Panc1 (cell line): ENCODE measurements at regions of chr3 and their contacts with region 1.

Region 1: GRCh38 chr3:46006238-46007032 is 10.8 kb upstream of the FYCO1 start:
- DNase-seq: no peak
- ATAC-seq: no peak
- H3K4me3 ChIP-seq: no peak overlapping the region
- H3K27ac ChIP-seq: no peak overlapping the region
- H3K4me1 ChIP-seq: no peaks in the 10 kb centered on the region
- H3K27me3 ChIP-seq: no peaks in the 10 kb centered on the region
- CTCF ChIP-seq: no peak

Region 2: DNA sequence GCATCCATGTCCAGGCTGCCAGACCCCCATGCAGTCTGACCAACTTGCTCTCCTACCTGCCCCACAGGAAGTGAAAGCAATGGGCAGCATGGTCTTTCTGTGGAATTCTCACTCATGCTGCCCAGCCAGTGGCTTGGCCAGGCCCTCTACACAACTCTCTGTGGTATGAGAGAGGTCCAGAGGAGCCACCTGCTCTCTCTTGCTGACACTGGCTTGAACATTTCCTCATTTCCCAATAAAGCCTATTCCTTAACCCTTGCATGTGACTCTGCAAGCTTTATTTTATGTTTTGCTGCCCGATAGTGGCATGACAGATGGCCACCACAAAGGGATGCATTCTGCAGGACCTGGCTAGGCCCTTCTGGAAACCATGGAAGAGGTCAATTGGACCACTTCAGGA is 147.9 kb after region 1 on chr3:
- CTCF ChIA-PET with region 1: no interaction called
- POLR2A ChIA-PET with region 1: no interaction called
- in situ Hi-C with region 1: no loop called
- intact Hi-C with region 1: no loop called
- DNase-seq: no peak
- ATAC-seq: no peak
- H3K4me3 ChIP-seq: no peak overlapping the region
- H3K27ac ChIP-seq: no peak overlapping the region
- H3K4me1 ChIP-seq: no peaks in the 10 kb centered on the region
- H3K27me3 ChIP-seq: no peaks in the 10 kb centered on the region
- CTCF ChIP-seq: no peak

Region 3: DNA sequence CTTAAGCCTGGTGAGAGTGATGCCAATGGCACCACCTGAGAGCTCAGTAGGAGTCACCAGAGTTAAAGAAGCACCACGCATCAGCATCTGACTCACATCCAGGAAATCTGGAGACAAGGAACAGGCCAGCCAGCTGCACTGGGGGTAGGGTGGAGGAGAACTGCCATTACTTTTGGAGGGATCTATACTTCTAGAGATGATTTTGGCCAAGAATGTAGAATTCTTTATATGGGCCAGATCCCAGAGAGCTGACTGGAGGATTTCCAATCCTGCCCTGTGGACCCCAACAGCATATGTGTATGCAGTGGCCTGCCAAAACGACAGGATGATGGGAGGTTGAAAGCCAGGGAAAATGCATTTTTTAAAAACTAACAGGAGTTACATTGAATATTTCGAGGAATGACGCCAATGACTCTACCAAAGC is 265.6 kb after region 1 on chr3:
- CTCF ChIA-PET with region 1: no interaction called
- POLR2A ChIA-PET with region 1: no interaction called
- in situ Hi-C with region 1: no loop called
- intact Hi-C with region 1: loop called (anchors 5 kb)
- DNase-seq: no peak
- ATAC-seq: no peak
- H3K4me3 ChIP-seq: no peak overlapping the region
- H3K27ac ChIP-seq: no peak overlapping the region
- H3K4me1 ChIP-seq: no peaks in the 10 kb centered on the region
- H3K27me3 ChIP-seq: 0 out of 2 replicates have a peak, but pooled peaks cover 2% of the 10 kb centered on the region
- CTCF ChIP-seq: no peak